ENCODE measurements at regions of chr5 and their contacts with region 1.

Region 1: DNA sequence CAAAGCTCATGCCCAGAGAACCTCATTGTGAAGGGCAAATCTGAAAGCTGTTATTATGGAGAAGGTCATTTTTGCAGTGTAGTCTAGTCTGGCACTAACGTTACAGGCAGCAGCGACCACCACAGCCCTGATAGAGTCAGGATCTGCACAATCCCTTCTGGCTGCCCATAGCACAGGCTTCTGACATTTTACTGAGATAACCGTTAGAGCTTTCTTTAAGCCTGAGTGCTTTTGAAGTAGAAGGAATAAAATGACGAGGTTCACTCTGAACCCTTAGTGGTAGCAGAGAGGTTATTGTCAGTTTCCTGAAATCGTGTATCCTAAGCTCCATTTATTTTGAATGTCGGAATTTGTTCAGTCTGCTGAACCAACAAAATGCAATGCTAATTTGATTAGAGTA is 505.1 kb downstream of the CDH12 start:
- H3K4me3 Mint-ChIP-seq: no peak overlapping the region
- H3K27ac Mint-ChIP-seq: no peak overlapping the region
- H3K4me1 Mint-ChIP-seq: no peaks in the 10 kb centered on the region
- H3K27me3 Mint-ChIP-seq: no peaks in the 10 kb centered on the region

Region 2: GRCh38 chr5:21791304-21791703 is 556.7 kb before region 1 on chr5:
- intact Hi-C with region 1: loop called (anchors 5 kb)
- H3K4me3 Mint-ChIP-seq: no peak overlapping the region
- H3K27ac Mint-ChIP-seq: no peak overlapping the region
- H3K4me1 Mint-ChIP-seq: no peaks in the 10 kb centered on the region
- H3K27me3 Mint-ChIP-seq: no peaks in the 10 kb centered on the region

Region 3: GRCh38 chr5:22102823-22103359 is 245.1 kb before region 1 on chr5:
- intact Hi-C with region 1: no loop called
- H3K4me3 Mint-ChIP-seq: no peak overlapping the region
- H3K27ac Mint-ChIP-seq: no peak overlapping the region
- H3K4me1 Mint-ChIP-seq: no peaks in the 10 kb centered on the region
- H3K27me3 Mint-ChIP-seq: no peaks in the 10 kb centered on the region

Region 4: DNA sequence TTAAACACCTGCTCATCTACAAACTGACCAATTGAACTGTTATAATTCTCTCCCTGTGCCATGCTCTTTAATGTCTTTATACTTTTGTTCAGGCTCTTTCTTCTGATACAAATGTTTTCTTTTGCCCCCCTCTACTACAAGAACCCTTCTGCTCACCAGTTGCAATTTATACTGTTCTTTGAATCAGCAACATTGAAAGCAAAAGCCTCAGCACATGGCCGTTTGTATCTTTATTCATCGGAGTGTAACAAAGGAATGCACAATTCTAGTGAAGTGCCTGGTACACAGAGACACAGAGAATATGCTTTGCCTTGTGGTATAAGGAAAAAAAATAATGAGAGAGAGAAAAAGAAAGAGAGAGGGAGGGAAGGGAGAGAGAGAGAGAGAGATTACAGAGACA is 42.0 kb before region 1 on chr5:
- intact Hi-C with region 1: no loop called
- H3K4me3 Mint-ChIP-seq: no peak overlapping the region
- H3K27ac Mint-ChIP-seq: no peak overlapping the region
- H3K4me1 Mint-ChIP-seq: no peaks in the 10 kb centered on the region
- H3K27me3 Mint-ChIP-seq: no peaks in the 10 kb centered on the region

Region 5: DNA sequence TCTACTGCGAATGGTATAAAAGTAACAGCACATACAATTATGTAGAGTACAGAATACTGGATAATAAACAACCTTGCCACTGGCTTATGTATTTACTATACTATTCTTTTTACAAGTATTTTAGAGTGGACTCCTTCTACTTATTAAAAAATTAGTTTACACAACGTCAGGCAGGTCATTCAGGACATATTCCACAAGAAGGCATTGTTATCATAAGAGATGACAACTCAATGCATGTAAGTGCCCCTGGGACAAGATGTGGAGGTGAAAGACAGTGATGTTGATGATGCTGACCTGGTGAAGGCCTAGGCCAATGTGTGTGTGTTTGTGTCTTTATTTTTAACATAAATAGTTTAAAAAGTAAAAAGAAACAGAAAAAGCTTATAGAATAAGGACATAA is 83.4 kb after region 1 on chr5:
- intact Hi-C with region 1: no loop called
- H3K4me3 Mint-ChIP-seq: no peak overlapping the region
- H3K27ac Mint-ChIP-seq: no peak overlapping the region
- H3K4me1 Mint-ChIP-seq: no peaks in the 10 kb centered on the region
- H3K27me3 Mint-ChIP-seq: no peaks in the 10 kb centered on the region